Panc1 (cell line): ENCODE measurements at regions of chr2 and their contacts with region 1.

Region 1: DNA sequence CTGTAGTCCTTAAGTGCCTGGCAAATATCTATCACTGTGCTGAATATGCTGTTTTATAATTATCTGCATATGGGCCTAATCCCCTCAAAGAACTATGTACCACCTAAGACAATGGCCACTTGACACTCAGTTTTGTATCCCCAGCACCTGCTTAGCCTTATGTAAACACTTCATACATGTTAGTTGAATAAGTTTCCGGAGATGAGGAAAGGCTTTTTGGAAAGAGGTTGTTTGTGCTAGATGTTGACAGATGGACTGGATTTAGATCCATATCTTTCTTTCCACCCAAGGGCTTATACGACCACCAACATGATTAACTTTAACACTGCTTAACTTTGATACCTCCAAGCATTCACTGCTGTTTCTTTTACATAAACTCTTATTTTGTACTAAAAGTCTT is 63.3 kb downstream of the FAM228A start:
- DNase-seq: no peak
- ATAC-seq: no peak
- H3K4me3 ChIP-seq: no peak overlapping the region
- H3K27ac ChIP-seq: no peak overlapping the region
- H3K4me1 ChIP-seq: no peaks in the 10 kb centered on the region
- H3K27me3 ChIP-seq: no peaks in the 10 kb centered on the region
- CTCF ChIP-seq: no peak

Region 2: DNA sequence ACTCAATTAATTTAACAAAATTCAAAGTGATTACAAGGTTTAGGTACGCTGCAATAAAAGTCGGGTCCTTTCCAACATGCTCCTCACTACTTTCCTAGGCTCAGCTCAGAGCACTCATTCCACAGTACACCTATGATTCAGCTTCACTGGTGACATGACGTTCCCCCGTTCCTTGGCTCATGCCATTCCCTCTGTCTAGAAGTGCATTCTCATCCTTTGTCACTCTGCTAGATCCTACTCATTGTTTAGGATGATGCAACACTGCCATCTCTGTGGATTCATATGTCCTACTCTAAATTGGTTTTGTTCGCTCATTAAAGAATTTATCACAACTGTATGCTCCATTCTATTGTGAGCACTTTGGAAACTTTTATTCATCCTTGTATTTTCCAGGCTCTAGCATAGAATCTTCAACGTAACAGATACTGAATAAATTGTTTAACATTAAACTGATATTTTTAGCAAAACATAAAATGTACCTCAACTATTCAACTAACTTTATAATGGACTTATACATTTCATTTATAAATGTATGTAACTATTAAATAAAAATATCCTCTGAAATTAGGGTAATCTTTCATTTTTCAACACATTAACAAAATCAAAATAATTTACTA is 15.3 kb after region 1 on chr2:
- CTCF ChIA-PET with region 1: no interaction called
- POLR2A ChIA-PET with region 1: no interaction called
- in situ Hi-C with region 1: no loop called
- intact Hi-C with region 1: no loop called
- DNase-seq: no peak
- ATAC-seq: no peak
- H3K4me3 ChIP-seq: no peak overlapping the region
- H3K27ac ChIP-seq: no peak overlapping the region
- H3K4me1 ChIP-seq: no peaks in the 10 kb centered on the region
- H3K27me3 ChIP-seq: no peaks in the 10 kb centered on the region
- CTCF ChIP-seq: no peak

Region 3: DNA sequence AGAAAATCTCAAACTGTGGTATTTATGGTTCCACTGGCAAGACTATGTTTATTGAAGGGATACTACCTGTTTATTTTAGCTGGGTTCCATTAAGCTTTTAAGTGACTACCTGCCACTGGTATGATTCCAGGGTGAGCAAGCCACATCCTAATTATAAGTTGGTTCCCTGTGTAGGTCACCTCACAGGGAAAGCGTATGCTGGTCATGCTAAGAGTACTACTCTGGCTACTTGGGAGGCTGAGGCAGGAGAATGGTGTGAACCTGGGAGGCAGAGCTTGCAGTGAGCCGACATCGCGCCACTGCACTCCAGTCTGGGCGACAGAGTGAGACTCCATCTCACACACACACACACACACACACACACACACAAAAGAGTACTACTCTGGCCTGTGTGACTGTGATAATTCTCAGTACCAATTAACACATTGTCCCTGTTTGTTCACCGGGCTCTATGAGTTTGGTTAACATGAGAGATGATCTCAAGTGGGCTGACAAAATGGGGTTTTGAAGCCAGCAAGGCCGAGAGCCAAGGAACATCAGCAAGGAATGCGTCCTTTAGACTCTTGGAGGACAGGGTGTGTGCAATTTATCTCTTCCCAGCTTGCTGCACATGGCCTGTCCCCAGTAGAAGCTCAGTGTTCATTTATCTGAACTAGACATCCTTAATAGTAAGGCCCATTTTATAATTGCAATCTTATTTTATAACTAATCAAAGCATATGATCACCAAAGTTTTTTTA is 137.4 kb after region 1 on chr2:
- CTCF ChIA-PET with region 1: no interaction called
- POLR2A ChIA-PET with region 1: interaction called, 14 read pairs
- in situ Hi-C with region 1: no loop called
- intact Hi-C with region 1: no loop called
- DNase-seq: no peak
- ATAC-seq: no peak; the same call in 1 of the 2 replicates
- H3K4me3 ChIP-seq: no peak overlapping the region
- H3K27ac ChIP-seq: no peak overlapping the region
- H3K4me1 ChIP-seq: no peaks in the 10 kb centered on the region
- H3K27me3 ChIP-seq: no peaks in the 10 kb centered on the region
- CTCF ChIP-seq: no peak

Region 4: DNA sequence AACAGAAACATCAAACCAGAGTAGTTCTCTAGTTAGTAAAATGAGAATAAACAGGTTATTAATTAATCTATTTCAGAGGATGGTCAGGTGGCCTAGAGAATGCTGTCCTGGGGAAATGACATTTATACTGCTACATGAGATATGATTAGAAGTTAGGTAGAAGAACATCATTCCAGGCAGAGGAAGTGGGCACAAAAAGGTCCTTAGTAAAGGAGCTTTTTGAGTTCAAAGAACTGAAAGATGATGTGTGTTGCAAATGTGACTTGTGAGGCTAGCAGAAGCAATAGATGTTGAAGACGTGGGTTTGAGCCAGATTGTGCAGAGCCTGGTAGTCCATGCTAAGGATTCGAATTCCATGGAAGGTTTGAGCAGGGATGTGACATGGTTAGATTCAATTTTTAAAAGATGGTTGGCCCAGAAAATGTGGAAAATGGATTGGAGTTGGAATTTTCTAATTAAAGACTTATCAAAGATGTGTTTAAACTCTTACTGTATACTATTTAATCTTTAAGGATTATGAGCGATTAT is 1829.9 kb after region 1 on chr2:
- CTCF ChIA-PET with region 1: no interaction called
- POLR2A ChIA-PET with region 1: no interaction called
- in situ Hi-C with region 1: no loop called
- intact Hi-C with region 1: no loop called
- DNase-seq: no peak
- ATAC-seq: 0 out of 2 replicates have a peak, but pooled peaks have one; percentile 52
- H3K4me3 ChIP-seq: no peak overlapping the region
- H3K27ac ChIP-seq: peak overlapping the region; percentile 70
- H3K4me1 ChIP-seq: peaks cover 24% of the 10 kb centered on the region
- H3K27me3 ChIP-seq: no peaks in the 10 kb centered on the region
- CTCF ChIP-seq: no peak